ENCODE measurements at regions of chr12 and their contacts with region 1.

Region 1: DNA sequence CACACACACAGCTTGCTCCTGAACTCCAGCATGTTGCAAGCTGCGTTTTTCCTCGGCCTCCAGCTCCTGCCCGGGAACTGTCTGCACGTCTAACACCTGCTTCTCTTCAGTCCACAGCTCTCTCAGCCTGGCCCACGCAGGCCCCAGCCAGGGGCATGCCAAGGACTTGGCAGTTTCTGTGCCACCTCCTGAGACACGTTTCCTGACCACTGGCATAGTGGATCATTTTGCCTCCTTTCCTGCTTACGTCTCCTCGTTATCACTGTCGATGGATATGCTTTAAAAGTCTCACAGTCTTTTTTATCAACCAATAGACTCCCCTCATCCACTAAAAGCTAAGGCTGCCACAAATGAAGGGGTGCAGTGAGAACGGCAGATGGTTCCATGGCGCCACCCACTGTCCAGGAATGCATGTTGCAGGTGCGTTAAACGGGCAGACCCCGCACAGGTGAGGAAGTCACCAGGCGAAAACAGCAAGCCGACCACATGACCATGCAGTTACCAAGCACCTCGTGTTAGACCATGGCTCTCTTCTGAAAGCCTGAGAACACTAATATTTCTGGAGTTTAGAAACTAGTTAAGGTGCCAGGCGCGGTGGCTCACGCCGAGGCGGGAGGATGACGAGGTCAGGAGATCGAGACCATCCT is 14.7 kb upstream of the TEAD4 start:
- DNase-seq: peak; percentile 46
- ATAC-seq: peak; percentile 82
- H3K4me3 ChIP-seq: no peak overlapping the region
- H3K27ac ChIP-seq: no peak overlapping the region
- H3K4me1 ChIP-seq: peaks cover 51% of the 10 kb centered on the region
- H3K27me3 ChIP-seq: no peaks in the 10 kb centered on the region
- CTCF ChIP-seq: peak; percentile 96
- EP300 ChIP-seq: no peak
- POLR2A ChIP-seq: no peak
- RAD21 ChIP-seq: peak; percentile 80

Region 2: DNA sequence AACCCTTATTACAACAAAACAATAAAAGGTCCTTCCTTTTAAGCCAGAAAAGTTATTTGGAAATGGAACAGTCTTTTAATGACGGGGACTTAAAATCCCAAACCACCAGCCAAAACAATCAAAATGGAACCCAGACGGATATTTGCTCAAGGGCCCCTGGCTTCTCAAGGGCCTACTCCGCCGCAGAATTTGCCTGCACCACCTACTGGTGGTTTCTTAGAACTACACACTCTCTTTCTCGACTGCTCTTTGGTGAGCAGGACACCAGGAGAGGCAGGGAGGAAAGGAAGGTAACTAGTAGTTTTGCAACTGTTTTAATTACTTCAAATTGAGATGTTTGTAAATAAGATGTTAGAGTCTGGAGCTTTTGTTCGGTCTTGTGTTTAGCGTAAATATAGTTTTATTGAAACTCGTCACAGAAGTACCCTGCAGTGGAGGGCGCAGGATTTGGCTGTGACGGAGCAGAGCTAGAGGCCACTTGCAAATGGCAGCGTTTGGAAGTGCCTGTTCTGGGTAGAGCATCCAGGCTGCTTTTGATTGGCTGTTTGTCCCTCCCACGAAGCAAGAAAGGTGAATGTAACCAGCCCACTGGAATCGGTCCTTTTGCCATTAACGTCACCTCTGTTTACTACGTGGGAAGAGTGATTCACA is 653.2 kb before region 1 on chr12:
- CTCF ChIA-PET with region 1: no interaction called
- POLR2A ChIA-PET with region 1: no interaction called
- in situ Hi-C with region 1: no loop called
- intact Hi-C with region 1: no loop called
- DNase-seq: peak; percentile 33
- ATAC-seq: peak; percentile 86
- H3K4me3 ChIP-seq: no peak overlapping the region
- H3K27ac ChIP-seq: no peak overlapping the region
- H3K4me1 ChIP-seq: no peaks in the 10 kb centered on the region
- H3K27me3 ChIP-seq: peaks cover 4 to 32% of the 10 kb centered on the region in 2 experiments
- CTCF ChIP-seq: peak; percentile 68
- EP300 ChIP-seq: no peak
- POLR2A ChIP-seq: no peak
- RAD21 ChIP-seq: no peak

Region 3: DNA sequence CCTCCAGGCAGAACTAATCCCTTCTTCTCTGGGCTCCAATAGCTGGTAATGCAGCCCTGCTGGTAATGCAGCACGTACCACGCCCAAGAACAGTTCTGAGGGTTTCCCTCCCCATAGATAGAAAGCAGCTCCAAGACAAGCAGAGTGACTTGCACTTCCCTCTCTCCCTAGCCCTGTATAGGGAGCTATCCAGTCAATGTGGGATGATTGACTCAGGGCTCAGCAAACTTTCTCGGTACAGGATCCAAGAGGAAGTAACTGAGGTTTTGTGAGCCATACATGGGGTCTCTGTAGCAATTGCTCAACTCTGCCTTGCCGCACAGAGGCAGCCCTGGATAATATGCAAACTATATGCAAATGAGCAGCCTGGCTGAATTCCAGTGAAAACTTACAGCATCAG is 165.2 kb before region 1 on chr12:
- CTCF ChIA-PET with region 1: no interaction called
- POLR2A ChIA-PET with region 1: no interaction called
- in situ Hi-C with region 1: no loop called
- intact Hi-C with region 1: no loop called
- DNase-seq: no peak
- ATAC-seq: no peak
- H3K4me3 ChIP-seq: no peak overlapping the region
- H3K27ac ChIP-seq: no peak overlapping the region
- H3K4me1 ChIP-seq: peaks cover 7% of the 10 kb centered on the region
- H3K27me3 ChIP-seq: peaks cover 1 to 57% of the 10 kb centered on the region in 2 experiments; a peak in 3 of 5 replicates
- CTCF ChIP-seq: no peak
- EP300 ChIP-seq: no peak
- POLR2A ChIP-seq: no peak
- RAD21 ChIP-seq: no peak

Region 4: DNA sequence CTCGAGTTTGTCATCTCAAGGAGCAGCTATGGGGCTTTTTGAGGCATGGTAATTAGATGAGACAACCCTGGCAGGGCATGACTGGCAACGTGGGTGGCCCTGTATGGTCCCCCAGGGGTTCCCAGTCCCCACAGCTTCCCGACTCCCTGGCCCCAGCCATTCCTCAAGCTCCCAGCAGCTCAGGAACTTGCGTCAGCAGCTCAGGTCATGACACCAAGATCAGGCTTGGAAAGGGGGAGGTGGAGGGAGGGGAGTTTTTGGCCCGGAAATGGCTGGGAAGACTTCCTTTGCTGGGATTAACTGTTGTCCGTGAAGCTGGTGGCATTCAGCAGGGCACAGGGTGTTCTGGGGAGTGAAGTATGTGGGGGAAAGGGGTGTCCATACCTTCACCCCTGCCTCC is 99.2 kb before region 1 on chr12:
- CTCF ChIA-PET with region 1: interaction called, 6 read pairs
- POLR2A ChIA-PET with region 1: no interaction called
- in situ Hi-C with region 1: loop called (anchors 5 kb)
- intact Hi-C with region 1: loop called (anchors 2 kb)
- DNase-seq: no peak
- ATAC-seq: no peak
- H3K4me3 ChIP-seq: no peak overlapping the region
- H3K27ac ChIP-seq: no peak overlapping the region
- H3K4me1 ChIP-seq: peaks cover 42% of the 10 kb centered on the region
- H3K27me3 ChIP-seq: no peaks in the 10 kb centered on the region; a peak in 1 of 5 replicates
- CTCF ChIP-seq: no peak
- EP300 ChIP-seq: no peak
- POLR2A ChIP-seq: no peak
- RAD21 ChIP-seq: no peak

Region 5: DNA sequence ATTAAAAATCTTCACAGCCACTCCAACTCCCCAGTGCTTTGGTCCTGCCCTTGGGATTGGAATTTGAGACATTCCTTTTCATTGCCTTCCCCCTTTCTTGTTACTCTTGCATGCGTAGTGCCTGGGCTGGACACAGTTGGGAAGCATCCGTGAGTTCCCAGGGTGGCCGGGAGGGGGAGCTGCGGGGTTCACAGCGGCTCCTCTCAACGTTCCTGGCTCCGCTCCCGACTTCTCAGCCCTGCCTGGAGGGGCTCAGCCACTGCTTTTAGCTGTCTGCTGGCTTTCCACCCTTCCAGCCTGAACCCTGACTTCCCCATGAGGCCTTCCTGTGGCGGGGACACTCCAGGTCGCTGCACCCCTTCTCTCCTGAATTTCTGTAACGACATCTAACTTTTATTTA is 90.9 kb before region 1 on chr12:
- CTCF ChIA-PET with region 1: interaction called, 5 read pairs
- POLR2A ChIA-PET with region 1: no interaction called
- in situ Hi-C with region 1: loop called (anchors 5 kb)
- intact Hi-C with region 1: loop called (anchors 2 kb)
- DNase-seq: peak; percentile 48
- ATAC-seq: peak; percentile 60
- H3K4me3 ChIP-seq: no peak overlapping the region
- H3K27ac ChIP-seq: no peak overlapping the region
- H3K4me1 ChIP-seq: peaks cover 31% of the 10 kb centered on the region
- H3K27me3 ChIP-seq: no peaks in the 10 kb centered on the region
- CTCF ChIP-seq: peak; percentile 82
- EP300 ChIP-seq: no peak
- POLR2A ChIP-seq: no peak
- RAD21 ChIP-seq: peak; percentile 63; the same call in 1 of the 2 replicates